GM13977 (cell line): ENCODE measurements at regions of chr2 and their contacts with region 1.

Region 1: GRCh38 chr2:97663965-97664635 is at the start of gene ACTR1B:
- DNase-seq: peak; percentile 99
- CTCF ChIP-seq: peak; percentile 56

Region 2: DNA sequence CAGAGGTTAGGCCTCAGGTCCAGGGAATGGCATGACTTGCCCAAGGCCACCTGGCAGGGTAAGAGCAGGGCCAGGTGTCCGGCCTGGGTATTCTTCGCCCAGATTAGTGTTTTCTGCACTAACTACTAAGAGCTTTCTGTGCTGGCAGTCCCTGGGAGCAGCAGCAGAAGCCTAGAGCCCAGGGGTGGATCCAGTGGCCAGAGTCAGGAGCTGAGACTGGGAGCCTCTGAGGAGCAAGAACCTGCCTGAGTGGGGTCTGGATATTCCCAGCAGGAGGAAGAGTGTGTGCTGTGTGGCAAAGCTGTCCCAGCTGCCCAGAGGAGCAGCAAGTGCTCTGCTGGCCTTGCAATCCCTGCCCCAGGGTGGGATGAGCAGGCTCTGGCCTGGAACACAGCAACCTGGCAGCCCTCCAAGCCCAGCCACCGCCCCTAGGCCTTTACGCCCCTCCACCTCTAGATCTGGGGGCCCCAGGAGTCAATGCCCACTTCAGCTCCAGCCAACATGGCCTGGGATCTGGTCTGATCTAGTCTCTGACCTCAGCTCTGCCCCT is 1598.6 kb before region 1 on chr2:
- in situ Hi-C with region 1: loop called (anchors 25 kb)
- DNase-seq: no peak
- CTCF ChIP-seq: no peak